ENCODE measurements at regions of chr15 and their contacts with region 1.

Region 1: DNA sequence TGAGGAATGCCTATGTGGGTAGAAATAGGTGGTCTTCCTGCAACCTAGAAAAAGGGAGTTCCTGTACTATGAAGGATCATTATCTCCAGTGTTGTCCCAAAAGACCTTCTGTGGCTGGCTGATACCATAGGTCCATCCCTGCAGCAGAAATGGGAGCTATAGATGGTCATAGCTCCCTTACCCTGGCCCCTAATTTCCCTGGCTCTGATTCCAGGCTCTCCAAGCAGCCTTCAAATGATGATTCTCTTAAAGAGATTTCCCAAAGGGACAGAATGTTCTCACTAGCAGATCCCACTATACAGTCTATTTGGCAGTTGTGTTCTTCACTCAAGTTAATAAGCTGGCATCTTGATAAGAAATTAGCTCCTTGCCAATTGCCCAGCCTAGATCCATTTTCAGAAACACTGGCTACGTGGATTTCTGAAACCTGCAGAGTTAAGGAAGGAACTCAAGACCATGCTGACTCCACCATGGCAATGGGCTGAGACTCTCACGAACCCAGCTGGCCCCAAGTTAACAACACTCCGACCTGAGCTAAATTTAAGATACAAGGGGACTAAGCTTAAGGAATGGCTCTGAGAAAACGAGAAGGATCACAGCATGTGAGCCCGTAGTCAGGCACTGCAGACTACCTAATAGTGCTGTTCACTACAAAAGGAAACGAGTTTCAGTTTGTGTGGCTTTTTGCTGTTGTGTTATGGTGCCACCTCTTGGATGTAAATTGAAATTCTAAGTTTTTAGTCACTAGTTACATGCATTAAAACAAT is 11.4 kb downstream of the C15orf40 start:
- DNase-seq: peak; percentile 28 to 59 (median 45)
- H3K4me3 ChIP-seq: peak overlapping the region; percentile 28 to 66 (median 29)
- H3K4me3 Mint-ChIP-seq: peak overlapping the region; percentile 85 to 95
- H3K27ac ChIP-seq: no peak overlapping the region
- H3K27ac Mint-ChIP-seq: peak overlapping the region in 2 of 7 donors; percentile 59 to 63
- H3K4me1 ChIP-seq: peaks cover 5% of the 10 kb centered on the region in 2 donors
- H3K4me1 Mint-ChIP-seq: peaks cover 8% of the 10 kb centered on the region
- H3K27me3 ChIP-seq: no peaks in the 10 kb centered on the region
- H3K27me3 Mint-ChIP-seq: peaks cover 0 to 2% (median 1%) of the 10 kb centered on the region in 3 donors
- CTCF ChIP-seq: peak; percentile 66

Region 2: GRCh38 chr15:82530606-82531379 is 469.3 kb before region 1 on chr15:
- intact Hi-C with region 1: loop called (anchors 5 to 10 kb)
- DNase-seq: peak; percentile 22 to 60 (median 41)
- H3K4me3 ChIP-seq: no peak overlapping the region
- H3K4me3 Mint-ChIP-seq: peak overlapping the region; percentile 32 to 76
- H3K27ac ChIP-seq: no peak overlapping the region
- H3K27ac Mint-ChIP-seq: no peak overlapping the region
- H3K4me1 ChIP-seq: peaks cover 0 to 3% of the 10 kb centered on the region in 2 donors
- H3K4me1 Mint-ChIP-seq: peaks cover 7% of the 10 kb centered on the region
- H3K27me3 ChIP-seq: no peaks in the 10 kb centered on the region
- H3K27me3 Mint-ChIP-seq: peaks cover 0 to 2% (median 2%) of the 10 kb centered on the region in 3 donors
- CTCF ChIP-seq: peak; percentile 81

Region 3: DNA sequence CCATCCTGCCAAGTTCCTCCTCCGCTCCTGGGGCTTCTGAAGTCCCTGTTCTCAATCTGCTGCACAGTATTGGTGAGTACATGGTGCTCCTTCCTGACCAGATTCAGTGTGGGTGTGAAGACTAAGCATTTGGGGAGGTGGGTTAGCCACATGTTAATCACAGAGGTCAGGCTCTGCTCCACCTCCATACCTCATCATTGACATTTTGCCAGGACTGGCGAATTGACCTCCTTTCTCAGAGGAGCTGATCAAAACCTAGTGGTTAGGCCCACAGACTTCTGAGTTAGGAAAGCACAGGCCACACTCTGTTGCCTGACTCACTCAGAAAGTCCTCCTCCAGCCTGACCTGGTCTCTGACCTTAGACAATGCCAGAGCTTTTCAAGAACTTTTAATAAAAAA is 451.4 kb before region 1 on chr15:
- intact Hi-C with region 1: loop called in 1 of 2 experiments (anchors 5 kb)
- DNase-seq: no peak
- H3K4me3 ChIP-seq: no peak overlapping the region
- H3K4me3 Mint-ChIP-seq: no peak overlapping the region
- H3K27ac ChIP-seq: no peak overlapping the region
- H3K27ac Mint-ChIP-seq: no peak overlapping the region
- H3K4me1 ChIP-seq: no peaks in the 10 kb centered on the region
- H3K4me1 Mint-ChIP-seq: no peaks in the 10 kb centered on the region
- H3K27me3 ChIP-seq: peaks cover 0 to 3% of the 10 kb centered on the region in 2 donors
- H3K27me3 Mint-ChIP-seq: peaks cover 3 to 7% (median 4%) of the 10 kb centered on the region in 3 donors
- CTCF ChIP-seq: no peak

Region 4: DNA sequence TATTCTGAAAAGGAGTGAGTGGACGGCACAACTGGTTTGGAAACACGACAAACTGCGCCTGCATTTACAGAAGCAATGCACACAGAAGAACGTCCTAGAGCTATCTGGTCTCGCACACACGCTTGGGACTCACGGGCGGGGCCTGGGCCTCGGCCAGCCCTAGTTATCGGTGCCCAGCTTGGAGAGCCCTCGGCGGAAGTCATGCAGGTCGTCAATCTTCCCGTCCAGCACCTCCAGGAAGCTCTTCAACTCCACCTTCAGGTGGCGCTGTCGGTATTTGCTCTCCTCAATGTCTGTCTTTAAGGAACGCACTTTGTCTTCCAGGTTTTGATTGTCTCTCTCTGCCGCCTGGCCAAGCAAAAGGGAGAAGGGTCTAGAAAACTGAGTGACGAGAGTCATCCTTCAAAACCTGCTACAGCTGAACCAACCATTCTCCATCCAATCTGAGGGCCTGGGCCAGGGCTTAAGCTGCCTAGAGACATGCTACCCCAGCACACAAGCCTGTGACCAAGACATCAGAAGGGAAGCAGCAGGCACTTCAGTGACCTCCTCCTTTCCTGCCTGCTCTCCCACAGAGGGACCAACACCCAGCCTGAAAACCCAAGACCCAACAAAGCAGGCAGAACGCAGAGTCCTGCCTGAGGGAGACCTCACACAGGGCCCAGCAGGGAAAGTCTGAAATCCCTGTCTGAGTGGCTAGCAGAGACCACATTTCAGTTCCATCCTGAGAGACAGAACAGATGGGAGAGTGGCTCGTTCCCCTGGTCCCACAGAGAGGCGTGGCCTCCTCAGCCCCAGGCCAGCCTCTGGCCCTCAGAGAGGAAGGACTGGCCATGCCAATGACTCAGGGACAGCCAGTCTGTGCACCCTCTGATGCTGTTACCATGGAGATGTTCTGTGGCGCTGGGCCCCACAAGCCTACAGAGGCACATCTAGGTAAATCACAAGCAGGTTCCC is 150.3 kb before region 1 on chr15:
- intact Hi-C with region 1: loop called (anchors 5 kb)
- DNase-seq: peak; percentile 76 to 84 (median 80)
- H3K4me3 ChIP-seq: no peak overlapping the region
- H3K4me3 Mint-ChIP-seq: peak overlapping the region; percentile 60 to 81
- H3K27ac ChIP-seq: peak overlapping the region in 1 of 2 donors; percentile 42
- H3K27ac Mint-ChIP-seq: peak overlapping the region in 5 of 7 donors; percentile 4 to 79 (median 64)
- H3K4me1 ChIP-seq: peaks cover 26 to 28% of the 10 kb centered on the region in 2 donors
- H3K4me1 Mint-ChIP-seq: peaks cover 26% of the 10 kb centered on the region
- H3K27me3 ChIP-seq: no peaks in the 10 kb centered on the region
- H3K27me3 Mint-ChIP-seq: peaks cover 0 to 2% (median 1%) of the 10 kb centered on the region in 3 donors
- CTCF ChIP-seq: peak; percentile 85